ENCODE measurements at regions of chr5 and their contacts with region 1.

Region 1: GRCh38 chr5:137498736-137499505 is at the start of gene SPOCK1:
- DNase-seq: peak; percentile 82
- ATAC-seq: peak; percentile 92 to 94
- total RNA-seq, gene SPOCK1: 75.0 to 213 TPM

Region 2: GRCh38 chr5:137086342-137086741 is 412.6 kb before region 1 on chr5:
- intact Hi-C with region 1: loop called in 1 of 2 experiments (anchors 10 kb)
- DNase-seq: no peak
- ATAC-seq: no peak

Region 3: DNA sequence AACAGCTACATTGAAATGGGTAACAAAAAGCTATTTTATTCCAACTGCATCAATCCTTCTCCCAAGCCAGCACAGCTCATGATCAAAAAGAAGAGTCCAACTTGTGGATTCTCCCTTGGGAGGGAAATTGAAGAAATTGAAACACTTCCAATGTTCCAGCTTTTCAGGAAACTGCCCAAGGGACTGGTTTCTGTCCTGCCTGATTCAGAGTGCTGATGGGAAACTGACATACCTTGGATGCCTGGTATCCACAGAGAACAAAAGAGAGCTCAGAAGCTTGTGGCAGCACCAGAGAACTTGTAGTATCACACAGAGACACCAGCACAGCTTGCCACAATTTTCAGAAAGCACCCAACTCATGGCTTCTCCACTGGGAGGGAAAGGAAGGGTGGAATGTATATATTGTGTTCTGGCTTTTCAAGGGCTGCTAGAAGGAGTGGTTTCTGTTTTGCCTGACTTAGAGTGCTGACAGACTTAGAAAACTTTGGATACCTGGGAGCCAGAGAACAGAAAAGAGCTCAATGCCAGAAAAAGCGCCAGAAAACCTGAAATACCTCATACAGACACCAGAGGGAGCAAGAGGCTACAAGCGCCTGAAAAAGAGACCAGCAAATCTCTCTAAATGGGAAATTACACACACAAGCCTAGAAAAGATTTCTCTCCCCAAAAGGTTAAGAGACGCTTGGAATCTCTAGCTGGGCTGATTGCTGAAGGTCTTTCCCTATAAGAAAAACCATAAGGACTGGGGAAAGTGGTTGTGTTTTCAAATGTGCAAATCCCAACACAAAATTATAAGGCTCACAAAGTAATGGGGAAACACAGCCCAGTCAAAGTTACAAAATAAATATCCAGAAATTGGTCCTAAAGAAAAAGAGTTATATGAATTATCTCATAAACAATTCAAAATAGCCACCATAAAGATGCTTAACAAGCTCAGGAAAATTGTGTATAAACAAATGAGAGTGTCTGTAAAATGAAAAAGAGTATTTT is 178.6 kb before region 1 on chr5:
- intact Hi-C with region 1: loop called (anchors 5 kb)
- DNase-seq: no peak
- ATAC-seq: peak; percentile 17 to 31

Region 4: DNA sequence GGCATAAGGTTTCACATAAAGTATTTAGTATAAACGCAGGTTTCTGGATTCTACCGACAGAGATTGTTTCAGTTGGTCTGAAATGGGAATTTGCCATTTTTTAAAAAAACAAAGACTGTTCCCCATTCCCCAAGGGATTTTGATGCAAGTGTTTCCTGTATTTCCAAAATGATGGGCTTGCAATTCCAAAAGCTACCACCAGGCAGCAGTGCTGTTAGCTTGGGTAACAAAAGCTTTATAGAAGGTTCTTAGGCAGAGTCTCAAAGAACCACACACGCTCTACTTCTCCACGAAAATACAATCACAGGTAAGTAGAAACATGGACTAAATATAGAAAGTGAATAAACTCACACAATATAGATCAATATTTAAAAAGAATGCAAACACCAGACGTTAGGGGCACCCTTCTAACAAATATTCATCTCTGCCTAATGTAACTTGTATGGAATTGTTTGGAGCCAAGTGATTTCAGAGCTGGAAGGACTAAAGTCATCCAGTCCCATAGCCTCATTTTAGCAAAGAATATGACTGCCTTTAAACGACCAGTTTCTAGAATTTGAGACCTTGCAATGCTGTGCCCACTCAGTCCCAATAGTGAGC is 154.1 kb before region 1 on chr5:
- intact Hi-C with region 1: loop called in 1 of 2 experiments (anchors 5 kb)
- DNase-seq: no peak
- ATAC-seq: peak in 1 of 2 donors; percentile 5